Endothelial cell of umbilical vein (primary cell): ENCODE measurements at regions of chr1 and their contacts with region 1.

Region 1: GRCh38 chr1:221667504-221667903 is 74.4 kb downstream of the DUSP10 start:
- DNase-seq: peak; percentile 16
- H3K4me3 ChIP-seq: no peak overlapping the region
- H3K27ac ChIP-seq: no peak overlapping the region
- H3K4me1 ChIP-seq: peaks cover 12% of the 10 kb centered on the region
- H3K27me3 ChIP-seq: peaks cover 20 to 70% of the 10 kb centered on the region in 2 experiments
- CTCF ChIP-seq: no peak
- POLR2A ChIP-seq: no peak

Region 2: DNA sequence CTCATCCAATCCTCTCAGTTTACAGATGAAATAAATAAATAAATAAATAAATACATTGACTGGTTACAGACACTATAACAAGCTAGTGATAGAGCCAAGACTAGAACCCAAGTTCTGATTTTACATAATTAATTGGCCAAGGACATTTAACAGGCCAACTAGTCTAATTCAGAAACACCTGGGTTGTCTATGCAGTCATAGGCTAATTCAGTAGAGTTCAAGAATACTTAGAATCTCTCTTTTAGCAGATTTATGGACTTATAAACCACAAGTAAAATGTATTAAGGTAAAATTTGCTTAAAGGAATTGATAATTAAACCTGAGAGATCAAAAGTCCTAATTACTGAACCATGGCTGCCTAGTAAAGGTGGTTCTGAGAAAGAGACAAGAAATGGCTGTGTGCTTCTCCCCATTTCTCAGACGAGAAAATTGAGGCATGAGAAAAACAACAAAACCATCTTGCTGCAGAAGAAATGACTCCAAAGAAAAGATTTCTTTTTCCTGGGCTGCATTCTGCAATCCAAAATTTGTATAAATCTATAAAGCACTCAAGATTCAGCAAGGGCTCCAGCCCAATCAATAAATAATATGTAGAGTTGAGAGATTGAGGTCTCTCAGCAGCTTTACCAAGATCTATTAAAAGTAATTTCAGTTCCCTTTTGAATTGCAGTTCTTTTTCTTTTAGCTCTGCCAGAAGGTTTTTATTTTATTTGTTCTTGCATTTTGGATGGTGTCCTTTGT is 23.9 kb before region 1 on chr1:
- CTCF ChIA-PET with region 1: no interaction called
- POLR2A ChIA-PET with region 1: no interaction called
- dilution Hi-C with region 1: no loop called
- intact Hi-C with region 1: loop called (anchors 1 kb)
- DNase-seq: no peak
- H3K4me3 ChIP-seq: no peak overlapping the region
- H3K27ac ChIP-seq: no peak overlapping the region
- H3K4me1 ChIP-seq: no peaks in the 10 kb centered on the region
- H3K27me3 ChIP-seq: no peaks in the 10 kb centered on the region
- CTCF ChIP-seq: no peak
- POLR2A ChIP-seq: no peak

Region 3: GRCh38 chr1:221718381-221719277 is 51.1 kb after region 1 on chr1:
- CTCF ChIA-PET with region 1: no interaction called
- POLR2A ChIA-PET with region 1: no interaction called
- dilution Hi-C with region 1: no loop called
- intact Hi-C with region 1: loop called (anchors 2 kb)
- DNase-seq: peak; percentile 23
- H3K4me3 ChIP-seq: no peak overlapping the region
- H3K27ac ChIP-seq: no peak overlapping the region
- H3K4me1 ChIP-seq: no peaks in the 10 kb centered on the region
- H3K27me3 ChIP-seq: no peaks in the 10 kb centered on the region
- CTCF ChIP-seq: no peak
- POLR2A ChIP-seq: no peak

Region 4: GRCh38 chr1:221868593-221869303 is 201.2 kb after region 1 on chr1:
- CTCF ChIA-PET with region 1: no interaction called
- POLR2A ChIA-PET with region 1: no interaction called
- dilution Hi-C with region 1: no loop called
- intact Hi-C with region 1: loop called (anchors 1 kb)
- DNase-seq: peak; percentile 79
- H3K4me3 ChIP-seq: no peak overlapping the region
- H3K27ac ChIP-seq: peak overlapping the region; percentile 16
- H3K4me1 ChIP-seq: peaks cover 13% of the 10 kb centered on the region
- H3K27me3 ChIP-seq: peaks cover 0 to 2% of the 10 kb centered on the region in 2 experiments
- CTCF ChIP-seq: no peak
- POLR2A ChIP-seq: no peak